ENCODE measurements at regions of chr11 and their contacts with region 1.

Region 1: GRCh38 chr11:43868852-43869567 is 11.6 kb upstream of the ALKBH3 start:
- DNase-seq: peak; percentile 25 to 77
- ATAC-seq: peak; percentile 89 to 98 (median 96)
- H3K4me3 ChIP-seq: no peak overlapping the region
- H3K4me3 Mint-ChIP-seq: peak overlapping the region; percentile 43
- H3K27ac ChIP-seq: peak overlapping the region; percentile 84
- H3K27ac Mint-ChIP-seq: peak overlapping the region; percentile 73 to 86
- H3K4me1 ChIP-seq: peaks cover 16% of the 10 kb centered on the region
- H3K4me1 Mint-ChIP-seq: peaks cover 28 to 29% of the 10 kb centered on the region in 2 donors
- H3K27me3 ChIP-seq: no peaks in the 10 kb centered on the region
- H3K27me3 Mint-ChIP-seq: peaks cover 9 to 14% of the 10 kb centered on the region in 2 donors
- CTCF ChIP-seq: no peak

Region 2: DNA sequence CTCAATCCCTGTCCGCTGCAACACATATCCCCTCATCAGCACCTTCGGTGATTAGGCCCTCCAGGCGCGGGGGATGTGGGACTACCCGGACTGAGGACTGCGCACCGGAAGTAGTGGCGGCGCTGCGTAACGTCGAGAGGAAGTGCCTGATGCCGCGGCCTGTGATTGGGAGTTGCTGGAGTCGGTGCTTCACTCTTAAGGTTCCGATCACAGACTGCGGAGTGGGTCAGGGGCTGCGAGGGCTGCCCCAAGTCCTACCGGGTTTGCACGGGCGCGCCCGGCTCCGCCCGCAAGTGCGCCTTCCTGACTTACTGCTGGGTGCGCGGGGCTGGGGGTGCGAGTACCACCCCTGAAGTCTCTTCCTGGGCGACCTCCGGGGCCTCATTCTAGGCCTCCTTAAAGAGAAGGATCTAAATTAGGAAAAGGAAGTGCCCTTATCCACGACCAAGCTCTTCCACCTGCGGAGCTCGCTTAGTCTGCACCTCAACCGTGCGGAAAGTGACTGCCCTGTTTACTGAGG is 11.7 kb after region 1 on chr11 and contains the start of gene ALKBH3:
- intact Hi-C with region 1: loop called (anchors 1 kb)
- DNase-seq: peak; percentile 86 to 96
- ATAC-seq: peak; percentile 100
- H3K4me3 ChIP-seq: peak within 1 kb of the TSS; percentile 78
- H3K4me3 Mint-ChIP-seq: peak within 1 kb of the TSS; percentile 98
- H3K27ac ChIP-seq: peak within 1 kb of the TSS; percentile 68
- H3K27ac Mint-ChIP-seq: peak within 1 kb of the TSS; percentile 93 to 97
- H3K4me1 ChIP-seq: peaks cover 13% of the 10 kb centered on the region
- H3K4me1 Mint-ChIP-seq: peaks cover 20 to 26% of the 10 kb centered on the region in 2 donors
- H3K27me3 ChIP-seq: peaks cover 4% of the 10 kb centered on the region
- H3K27me3 Mint-ChIP-seq: peaks cover 9 to 20% of the 10 kb centered on the region in 2 donors
- CTCF ChIP-seq: no peak
- total RNA-seq, gene ALKBH3: 24.3 to 30.8 (median 29.6) TPM

Region 3: DNA sequence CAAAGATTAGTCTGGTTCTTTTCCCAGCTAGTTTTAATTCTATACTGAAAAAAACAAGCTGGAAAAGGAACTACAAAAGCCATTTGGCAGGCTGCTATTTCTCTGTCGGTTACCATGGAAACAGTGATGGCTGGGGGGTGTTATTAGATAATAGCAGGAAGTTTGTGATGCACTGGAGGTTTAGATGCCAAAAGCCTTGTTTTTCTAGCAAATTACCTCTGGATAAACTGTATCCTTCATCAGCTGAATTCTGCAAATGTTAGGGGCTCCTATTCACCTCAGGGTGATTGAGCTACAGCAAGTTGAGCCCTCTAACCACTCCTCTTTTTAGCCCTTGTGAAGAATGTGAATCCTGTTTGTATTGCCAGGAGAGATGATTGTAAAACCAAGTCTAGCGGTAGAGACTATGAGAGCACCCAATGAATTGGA is 36.8 kb after region 1 on chr11:
- intact Hi-C with region 1: no loop called
- DNase-seq: no peak
- ATAC-seq: no peak
- H3K4me3 ChIP-seq: no peak overlapping the region
- H3K4me3 Mint-ChIP-seq: no peak overlapping the region
- H3K27ac ChIP-seq: no peak overlapping the region
- H3K27ac Mint-ChIP-seq: no peak overlapping the region
- H3K4me1 ChIP-seq: no peaks in the 10 kb centered on the region
- H3K4me1 Mint-ChIP-seq: peaks cover 6 to 25% of the 10 kb centered on the region in 2 donors
- H3K27me3 ChIP-seq: no peaks in the 10 kb centered on the region
- H3K27me3 Mint-ChIP-seq: no peaks in the 10 kb centered on the region
- CTCF ChIP-seq: no peak

Region 4: GRCh38 chr11:44065841-44066731 is 197.1 kb after region 1 on chr11 and contains the start of gene ACCS:
- intact Hi-C with region 1: no loop called
- DNase-seq: peak; percentile 87 to 95
- ATAC-seq: peak; percentile 95 to 98 (median 97)
- H3K4me3 ChIP-seq: peak within 1 kb of the TSS; percentile 96
- H3K4me3 Mint-ChIP-seq: peak within 1 kb of the TSS; percentile 93
- H3K27ac ChIP-seq: peak within 1 kb of the TSS; percentile 70
- H3K27ac Mint-ChIP-seq: peak within 1 kb of the TSS; percentile 79 to 95
- H3K4me1 ChIP-seq: peaks cover 13% of the 10 kb centered on the region
- H3K4me1 Mint-ChIP-seq: peaks cover 20 to 33% of the 10 kb centered on the region in 2 donors
- H3K27me3 ChIP-seq: no peaks in the 10 kb centered on the region
- H3K27me3 Mint-ChIP-seq: peaks cover 0 to 3% of the 10 kb centered on the region in 2 donors
- CTCF ChIP-seq: peak; percentile 95
- total RNA-seq, gene ACCS: 16.3 to 32.1 (median 31.9) TPM